ENCODE measurements at regions of chr13 and their contacts with region 1.

Region 1: GRCh38 chr13:27374650-27375049 is 49.8 kb upstream of the GTF3A start:
- DNase-seq: peak; percentile 73 to 77
- ATAC-seq: peak; percentile 91
- H3K4me3 ChIP-seq: no peak overlapping the region
- H3K27ac ChIP-seq: no peak overlapping the region
- H3K4me1 ChIP-seq: no peaks in the 10 kb centered on the region
- H3K27me3 ChIP-seq: no peaks in the 10 kb centered on the region

Region 2: DNA sequence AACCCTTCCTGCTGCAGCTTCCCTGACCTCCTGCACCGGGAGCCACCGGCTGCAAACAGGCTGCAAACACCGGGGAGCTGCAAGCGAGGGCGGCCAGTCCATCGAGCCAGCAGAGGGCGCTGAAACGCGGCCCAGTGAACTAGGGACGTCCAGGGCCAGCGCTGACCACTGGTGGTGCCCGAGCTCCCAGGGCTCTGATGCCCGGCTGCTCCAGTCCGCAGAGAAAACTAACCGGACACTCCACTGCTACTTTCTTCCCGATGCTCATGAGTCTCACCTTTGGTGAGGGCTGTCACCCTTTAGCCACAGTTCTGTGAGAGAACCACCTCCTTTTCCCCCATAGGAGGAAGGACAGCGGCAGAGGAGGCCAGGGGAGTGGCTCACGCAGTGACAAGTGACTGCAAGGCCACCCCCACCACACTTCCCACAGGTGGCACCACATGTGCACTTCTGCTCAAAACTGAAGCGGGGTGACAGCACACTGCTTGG is 158.5 kb after region 1 on chr13:
- intact Hi-C with region 1: loop called (anchors 5 to 10 kb)
- DNase-seq: peak; percentile 90 to 96
- ATAC-seq: peak; percentile 89
- H3K4me3 ChIP-seq: no peak overlapping the region
- H3K27ac ChIP-seq: no peak overlapping the region
- H3K4me1 ChIP-seq: no peaks in the 10 kb centered on the region
- H3K27me3 ChIP-seq: no peaks in the 10 kb centered on the region

Region 3: GRCh38 chr13:27620377-27621115 is 245.9 kb after region 1 on chr13 and contains the start of gene LNX2:
- intact Hi-C with region 1: loop called in 1 of 2 experiments (anchors 5 kb)
- DNase-seq: peak; percentile 99
- ATAC-seq: peak; percentile 98
- H3K4me3 ChIP-seq: peak within 1 kb of the TSS; percentile 82 to 99
- H3K27ac ChIP-seq: peak within 1 kb of the TSS; percentile 43 to 99
- H3K4me1 ChIP-seq: peaks cover 0 to 4% of the 10 kb centered on the region in 2 donors
- H3K27me3 ChIP-seq: no peaks in the 10 kb centered on the region
- total RNA-seq, gene LNX2: 9.5 to 10.3 TPM

Region 4: DNA sequence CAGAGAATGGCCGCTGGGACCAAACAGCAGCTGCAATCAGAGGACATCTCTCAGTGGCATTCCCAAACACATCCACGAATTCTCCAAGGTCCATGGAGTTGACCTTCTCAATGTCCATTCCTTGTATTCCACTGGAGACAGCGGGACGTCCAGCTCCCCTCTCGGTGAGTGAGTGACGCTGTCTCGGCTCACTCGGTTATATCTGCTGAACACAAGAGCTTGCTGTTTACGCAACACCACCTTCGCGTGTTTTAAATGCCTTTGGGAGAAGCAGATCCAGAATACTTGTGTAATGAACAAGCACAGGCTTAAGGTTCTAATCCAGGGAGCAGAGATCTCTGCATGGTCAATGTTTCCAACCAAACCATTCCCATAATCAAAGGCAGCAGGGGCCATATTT is 613.9 kb after region 1 on chr13 and contains the start of gene URAD:
- intact Hi-C with region 1: loop called in 1 of 2 experiments (anchors 5 kb)
- DNase-seq: peak in 1 of 2 donors; percentile 44
- ATAC-seq: no peak
- H3K4me3 ChIP-seq: no peak within 1 kb of the TSS
- H3K27ac ChIP-seq: no peak within 1 kb of the TSS
- H3K4me1 ChIP-seq: no peaks in the 10 kb centered on the region
- H3K27me3 ChIP-seq: no peaks in the 10 kb centered on the region
- total RNA-seq, gene URAD: not detected